ENCODE measurements at regions of chr6 and their contacts with region 1.

Region 1: GRCh38 chr6:108558372-108559096 is 2.2 kb upstream of the FOXO3 start:
- DNase-seq: peak; percentile 99
- ATAC-seq: peak; percentile 69 to 74

Region 2: DNA sequence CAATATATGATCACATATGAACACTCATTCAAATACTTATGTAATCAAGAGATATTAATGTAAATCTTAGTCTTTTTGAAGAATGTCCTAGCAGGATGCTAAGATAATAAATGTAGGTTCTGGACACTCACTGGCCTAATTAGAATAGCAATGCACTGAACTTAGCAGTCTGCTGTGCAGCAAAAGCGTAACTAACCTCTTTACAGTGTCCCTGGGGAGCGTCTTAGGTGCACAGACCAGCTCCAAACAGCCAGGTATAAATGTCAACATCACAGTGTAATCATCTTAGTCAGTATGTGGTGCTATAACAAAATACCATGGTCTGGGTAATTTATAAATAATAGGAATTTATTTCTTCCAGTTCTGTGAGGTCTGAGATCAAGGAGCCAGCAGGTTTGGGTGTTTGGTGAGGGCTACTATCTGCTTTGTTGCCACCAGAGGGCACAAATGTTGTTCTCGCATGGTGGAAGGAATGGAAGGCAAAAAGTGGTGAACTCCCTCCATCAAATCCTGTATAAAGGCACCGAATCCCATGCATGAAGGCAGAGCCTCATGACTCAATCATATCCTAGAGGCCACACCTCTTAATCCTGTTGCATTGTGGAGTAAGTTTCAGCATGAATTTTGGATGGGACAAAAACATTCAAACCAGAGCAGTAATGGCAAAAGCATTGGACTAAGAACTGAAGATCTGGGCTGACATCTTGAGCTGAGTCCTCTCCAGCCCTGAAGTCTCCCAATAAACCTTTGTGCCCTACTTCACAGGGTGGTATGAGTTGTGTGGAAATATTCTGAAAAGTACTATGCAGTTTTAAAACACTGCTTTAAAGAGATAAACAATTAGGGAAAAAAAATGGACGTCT is 39.6 kb before region 1 on chr6:
- intact Hi-C with region 1: no loop called
- DNase-seq: no peak
- ATAC-seq: no peak

Region 3: DNA sequence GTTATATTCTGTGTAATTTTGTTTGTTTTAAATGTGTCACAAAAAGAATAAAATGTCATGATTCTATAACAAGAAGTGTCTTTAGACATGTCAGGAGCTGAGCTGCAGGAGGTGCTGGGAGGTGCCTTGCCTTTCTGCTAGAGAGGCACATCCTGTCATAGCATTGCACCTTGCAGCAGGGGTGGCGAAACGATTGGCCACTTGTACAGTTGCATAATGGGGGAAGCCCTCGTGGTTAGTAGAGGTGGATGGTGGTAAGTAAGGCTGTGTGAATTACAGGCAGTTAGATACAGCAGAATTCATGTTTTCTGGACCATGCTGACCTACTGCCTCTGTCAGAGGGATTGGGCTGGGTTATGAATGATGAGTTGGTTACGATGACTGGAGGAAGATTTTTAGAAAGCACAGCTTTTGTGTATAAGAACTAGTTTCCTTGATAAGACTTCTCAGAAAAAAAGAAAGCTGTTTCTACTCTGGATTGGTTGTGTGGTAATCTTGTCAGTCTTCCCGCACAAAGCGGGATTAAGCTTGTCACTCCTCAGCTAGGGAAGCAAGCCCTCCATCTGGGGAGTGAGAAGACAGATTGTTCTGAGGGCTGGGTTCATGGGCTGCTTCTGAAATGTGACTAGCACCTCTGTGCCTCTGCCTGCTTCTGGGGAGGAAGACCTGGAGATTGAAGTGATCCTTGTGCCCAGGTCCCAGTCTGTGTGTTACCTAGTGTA is 77.1 kb after region 1 on chr6:
- intact Hi-C with region 1: no loop called
- DNase-seq: no peak
- ATAC-seq: no peak

Region 4: DNA sequence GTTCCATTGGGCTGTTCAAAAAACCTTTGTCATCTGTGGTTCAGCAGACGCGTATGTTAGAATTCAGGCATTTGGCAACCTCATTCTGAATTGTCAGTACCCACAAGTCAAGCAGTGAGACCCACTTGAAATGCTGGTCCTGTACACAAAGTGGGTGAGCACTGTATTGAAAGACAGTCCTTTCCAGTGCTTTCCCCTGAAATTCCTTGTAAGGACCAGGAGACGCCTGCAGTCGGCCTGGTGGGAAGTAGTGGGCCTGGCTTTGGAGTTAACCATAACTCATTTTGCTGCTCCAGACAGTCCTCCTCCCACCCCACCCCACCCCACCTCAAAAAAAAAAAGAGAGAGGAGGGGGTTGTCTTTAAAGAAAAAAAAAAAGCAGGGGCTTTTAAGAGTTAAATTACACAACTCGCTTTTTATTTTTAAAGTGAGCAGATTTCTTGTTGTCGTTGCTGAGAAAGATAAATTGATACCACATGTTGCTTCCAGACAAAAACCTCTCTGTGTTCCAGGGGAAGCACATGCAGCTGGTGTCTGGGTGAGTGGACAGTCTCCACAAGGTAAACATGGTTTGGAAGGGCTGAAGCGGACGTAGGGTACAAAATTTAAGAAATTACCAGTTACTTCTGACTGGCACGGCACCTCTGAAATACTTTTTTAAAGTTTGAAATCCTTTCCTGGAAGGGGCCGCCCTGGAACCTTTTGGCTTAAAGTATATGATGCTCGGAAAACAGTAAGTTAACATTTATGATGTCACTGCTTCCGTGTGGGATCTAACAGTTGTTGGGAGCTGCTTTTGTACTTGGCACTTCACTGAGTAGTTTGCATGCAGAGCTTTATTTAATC is 97.5 kb after region 1 on chr6:
- intact Hi-C with region 1: loop called (anchors 5 to 10 kb)
- DNase-seq: peak; percentile 53
- ATAC-seq: peak; percentile 42 to 52

Region 5: GRCh38 chr6:108673602-108674001 is 115.1 kb after region 1 on chr6:
- intact Hi-C with region 1: no loop called
- DNase-seq: no peak
- ATAC-seq: peak in 1 of 2 donors; percentile 9

Region 6: DNA sequence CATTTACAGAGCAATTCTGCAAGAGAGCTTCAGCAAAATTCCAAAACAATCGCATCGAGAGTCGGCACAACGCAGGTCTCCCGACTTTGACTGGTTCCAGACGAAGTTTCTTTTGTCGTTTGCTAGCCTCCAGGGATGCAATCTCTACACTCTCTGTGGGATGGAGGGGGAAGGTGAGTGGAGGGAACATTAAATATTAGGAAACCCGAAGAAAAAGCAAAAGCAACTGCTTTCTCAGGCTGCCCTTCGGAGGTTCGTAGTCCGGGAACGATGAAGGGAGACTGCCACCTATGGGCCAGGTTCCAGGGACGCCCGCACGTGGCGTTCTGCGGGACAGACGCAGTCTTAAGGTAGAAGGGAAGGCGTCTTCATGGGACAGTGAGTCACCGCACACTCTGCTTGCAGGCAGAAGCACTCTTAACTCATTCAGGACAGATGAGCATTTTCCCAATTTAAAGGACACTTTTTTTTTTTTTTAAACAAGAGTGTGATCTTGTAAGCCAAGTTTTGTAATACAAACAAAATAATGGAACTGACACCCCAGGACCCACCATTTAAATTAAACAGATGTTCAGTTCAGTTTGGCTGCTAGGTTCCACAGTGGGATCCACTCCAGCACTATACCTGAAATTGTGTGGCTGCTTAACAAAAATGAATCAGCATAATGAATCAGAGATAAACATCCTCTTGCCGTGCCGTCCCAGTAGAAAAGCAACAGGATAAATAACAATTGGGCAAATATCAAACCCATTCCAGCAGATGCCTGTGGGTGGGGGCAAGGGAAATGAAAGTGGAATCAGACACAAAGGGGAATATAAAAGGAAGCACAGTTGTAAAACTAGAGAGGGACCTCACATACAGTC is 223.9 kb after region 1 on chr6:
- intact Hi-C with region 1: loop called (anchors 2 to 5 kb)
- DNase-seq: peak; percentile 85
- ATAC-seq: peak; percentile 94 to 95

Region 7: GRCh38 chr6:108947114-108947854 is 388.8 kb after region 1 on chr6:
- intact Hi-C with region 1: no loop called
- DNase-seq: no peak
- ATAC-seq: peak; percentile 35 to 63

Region 8: DNA sequence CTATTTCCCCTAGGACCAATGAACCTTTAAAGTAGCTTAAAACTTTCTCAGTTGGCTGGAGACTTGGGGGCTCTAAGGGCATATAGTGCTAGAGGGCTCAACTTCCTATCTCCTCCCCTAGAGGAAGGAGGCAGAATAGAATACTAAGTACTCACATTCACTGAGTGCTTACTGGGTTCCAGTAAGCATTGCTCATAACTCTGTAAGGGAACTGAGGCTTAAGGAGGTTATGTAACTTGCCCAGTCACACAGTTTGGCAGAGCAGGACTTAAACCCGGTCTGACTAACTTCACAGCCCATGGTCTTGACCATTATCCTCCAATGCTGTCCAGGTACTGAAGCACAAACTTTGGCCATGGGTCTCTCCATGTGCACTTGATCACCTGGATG is 523.6 kb after region 1 on chr6:
- intact Hi-C with region 1: loop called in 1 of 2 experiments (anchors 5 kb)
- DNase-seq: no peak
- ATAC-seq: peak in 1 of 2 donors; percentile 60

Measured in left cardiac atrium (tissue), 4 donors.